Activated CD4-positive, alpha-beta T cell treated with anti-CD3 and anti-CD28 coated beads, Interleukin-2, amount 10 ng/mL, durations not matched to agents 24 days and 14 days (primary cell): ENCODE measurements at regions of chr6 and their contacts with region 1.

Region 1: GRCh38 chr6:73329201-73329600 is 24.9 kb downstream of the DPPA5 start:
- DNase-seq: no peak
- H3K4me3 Mint-ChIP-seq: no peak overlapping the region
- H3K27ac Mint-ChIP-seq: no peak overlapping the region
- H3K4me1 Mint-ChIP-seq: no peaks in the 10 kb centered on the region
- H3K27me3 Mint-ChIP-seq: peaks cover 36% of the 10 kb centered on the region

Region 2: GRCh38 chr6:71533939-71534379 is 1795.2 kb before region 1 on chr6:
- intact Hi-C with region 1: loop called (anchors 10 kb)
- DNase-seq: no peak
- H3K4me3 Mint-ChIP-seq: no peak overlapping the region
- H3K27ac Mint-ChIP-seq: no peak overlapping the region
- H3K4me1 Mint-ChIP-seq: no peaks in the 10 kb centered on the region
- H3K27me3 Mint-ChIP-seq: no peaks in the 10 kb centered on the region

Region 3: DNA sequence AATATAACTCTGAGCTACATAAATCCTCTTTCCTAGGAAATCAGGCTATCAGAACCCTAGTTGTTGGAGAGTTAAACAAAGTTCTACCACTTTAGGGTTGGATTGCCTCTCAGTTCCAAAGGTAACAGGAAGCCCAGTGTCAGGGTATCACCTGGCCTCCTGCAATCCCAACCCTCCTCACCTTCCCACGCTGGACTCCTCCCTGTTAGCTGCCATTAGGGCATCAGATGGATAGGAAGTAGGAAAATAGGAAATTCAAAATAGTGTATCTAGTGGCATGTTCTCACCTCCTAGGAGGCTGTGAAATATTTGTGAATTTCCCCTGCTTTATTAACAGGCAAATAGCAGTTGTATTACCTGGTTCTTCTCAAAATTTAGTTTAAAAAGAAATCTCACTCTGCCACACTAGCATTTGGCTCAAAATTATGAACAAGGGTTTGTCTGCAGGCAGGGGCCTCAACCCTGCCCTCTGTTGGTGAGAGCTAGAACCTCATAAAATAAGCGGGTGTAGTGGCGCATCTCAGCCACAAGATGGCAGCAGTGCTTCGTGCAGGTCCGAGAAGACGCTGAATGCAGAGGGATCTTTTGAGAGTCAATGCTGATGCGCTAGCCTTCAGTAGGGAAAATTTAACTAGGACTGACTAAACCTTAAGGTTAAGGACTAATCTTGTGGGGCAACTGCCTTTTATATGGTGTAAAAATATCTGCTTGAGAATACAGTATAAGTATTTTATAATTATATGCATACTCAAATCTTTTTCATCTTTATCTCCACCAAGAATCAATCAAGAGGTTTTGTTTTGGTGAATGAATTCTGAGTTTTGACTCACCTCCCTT is 917.1 kb before region 1 on chr6:
- intact Hi-C with region 1: loop called (anchors 2 kb)
- DNase-seq: peak; percentile 94
- H3K4me3 Mint-ChIP-seq: no peak overlapping the region
- H3K27ac Mint-ChIP-seq: no peak overlapping the region
- H3K4me1 Mint-ChIP-seq: no peaks in the 10 kb centered on the region
- H3K27me3 Mint-ChIP-seq: peaks cover 4% of the 10 kb centered on the region

Region 4: DNA sequence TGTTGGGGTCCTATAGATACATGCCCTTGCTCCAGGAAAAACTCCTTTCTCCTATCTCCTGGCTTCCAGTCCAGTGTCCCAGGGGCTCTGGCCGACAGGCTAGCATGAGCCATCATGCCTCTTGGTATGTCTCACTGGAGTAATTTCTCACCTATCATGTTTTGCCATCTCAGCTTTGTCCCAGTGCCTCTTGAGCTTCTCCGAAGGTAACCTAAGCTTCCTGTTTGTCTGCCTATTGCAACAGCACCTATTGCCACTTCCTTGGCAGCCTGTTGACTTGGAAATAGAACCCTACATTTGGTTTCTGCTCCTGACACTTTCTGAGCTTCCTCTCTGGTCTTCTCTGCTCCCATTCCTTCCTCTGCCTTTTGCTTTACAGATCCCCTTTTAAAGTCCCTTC is 509.6 kb before region 1 on chr6:
- intact Hi-C with region 1: no loop called
- DNase-seq: no peak
- H3K4me3 Mint-ChIP-seq: no peak overlapping the region
- H3K27ac Mint-ChIP-seq: no peak overlapping the region
- H3K4me1 Mint-ChIP-seq: no peaks in the 10 kb centered on the region
- H3K27me3 Mint-ChIP-seq: no peaks in the 10 kb centered on the region

Region 5: GRCh38 chr6:73207221-73207837 is 121.9 kb before region 1 on chr6:
- intact Hi-C with region 1: no loop called
- DNase-seq: no peak
- H3K4me3 Mint-ChIP-seq: no peak overlapping the region
- H3K27ac Mint-ChIP-seq: no peak overlapping the region
- H3K4me1 Mint-ChIP-seq: no peaks in the 10 kb centered on the region
- H3K27me3 Mint-ChIP-seq: peaks cover 3% of the 10 kb centered on the region

Region 6: DNA sequence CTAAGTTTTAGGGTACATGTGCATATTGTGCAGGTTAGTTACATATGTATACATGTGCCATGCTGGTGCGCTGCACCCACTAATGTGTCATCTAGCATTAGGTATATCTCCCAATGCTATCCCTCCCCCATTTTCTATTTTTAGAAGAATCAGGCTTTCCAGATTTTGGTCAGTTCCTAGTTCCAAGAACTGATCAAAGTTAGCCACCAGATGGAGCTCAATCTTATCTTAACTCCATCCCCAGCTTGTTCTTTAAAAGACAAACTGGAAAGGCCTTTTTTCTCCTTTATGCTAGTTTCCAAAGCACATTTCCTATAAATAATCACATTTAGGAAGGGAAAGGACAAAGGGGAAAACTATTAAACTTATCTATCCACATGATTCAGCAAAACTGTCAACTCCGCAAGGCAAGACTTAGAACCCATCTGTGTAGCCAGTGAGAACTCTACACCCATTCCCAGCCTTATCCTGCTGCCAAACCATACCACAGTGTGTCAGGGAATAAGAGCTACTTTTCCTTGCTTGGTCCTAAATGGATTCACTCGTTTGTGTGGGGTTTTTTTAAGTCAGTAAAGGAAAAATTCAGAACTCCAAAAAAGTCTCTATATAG is 43.4 kb before region 1 on chr6:
- intact Hi-C with region 1: loop called (anchors 1 kb)
- DNase-seq: no peak
- H3K4me3 Mint-ChIP-seq: no peak overlapping the region
- H3K27ac Mint-ChIP-seq: no peak overlapping the region
- H3K4me1 Mint-ChIP-seq: no peaks in the 10 kb centered on the region
- H3K27me3 Mint-ChIP-seq: no peaks in the 10 kb centered on the region

Region 7: GRCh38 chr6:73461537-73462350 is 132.5 kb after region 1 on chr6 and contains the start of gene MTO1:
- intact Hi-C with region 1: no loop called
- DNase-seq: peak; percentile 93
- H3K4me3 Mint-ChIP-seq: peak within 1 kb of the TSS; percentile 94
- H3K27ac Mint-ChIP-seq: peak within 1 kb of the TSS; percentile 98
- H3K4me1 Mint-ChIP-seq: peaks cover 45% of the 10 kb centered on the region
- H3K27me3 Mint-ChIP-seq: no peaks in the 10 kb centered on the region
- total RNA-seq, gene MTO1: 35.5 and 35.7 TPM in 2 replicates

Region 8: DNA sequence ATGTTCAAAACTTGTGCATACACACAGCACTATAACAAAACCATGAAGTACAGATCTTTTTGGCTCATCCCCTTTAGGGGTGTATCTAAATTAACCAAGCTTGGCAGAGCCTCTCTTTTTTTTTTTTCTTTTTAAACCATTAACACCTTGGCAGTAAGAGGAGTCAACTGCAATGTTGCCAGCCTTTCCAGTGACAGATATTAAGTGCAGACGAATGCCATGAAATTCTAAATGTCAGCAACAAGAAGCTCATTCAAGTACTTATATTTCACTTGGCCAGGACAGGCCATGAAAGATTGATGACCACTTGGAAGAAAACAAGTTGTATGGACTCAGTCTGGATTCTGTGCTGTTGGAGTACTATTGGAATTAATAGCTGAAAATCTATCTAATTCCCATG is 274.8 kb after region 1 on chr6:
- intact Hi-C with region 1: no loop called
- DNase-seq: no peak
- H3K4me3 Mint-ChIP-seq: no peak overlapping the region
- H3K27ac Mint-ChIP-seq: no peak overlapping the region
- H3K4me1 Mint-ChIP-seq: no peaks in the 10 kb centered on the region
- H3K27me3 Mint-ChIP-seq: no peaks in the 10 kb centered on the region